Dendritic cell treated with granulocyte-macrophage colony-stimulating factor and Interleukin-4, amounts not matched to agents 40 ng/mL and 50 ng/mL, for 4 days (primary cell): ENCODE measurements at regions of chr6 and their contacts with region 1.

Region 1: DNA sequence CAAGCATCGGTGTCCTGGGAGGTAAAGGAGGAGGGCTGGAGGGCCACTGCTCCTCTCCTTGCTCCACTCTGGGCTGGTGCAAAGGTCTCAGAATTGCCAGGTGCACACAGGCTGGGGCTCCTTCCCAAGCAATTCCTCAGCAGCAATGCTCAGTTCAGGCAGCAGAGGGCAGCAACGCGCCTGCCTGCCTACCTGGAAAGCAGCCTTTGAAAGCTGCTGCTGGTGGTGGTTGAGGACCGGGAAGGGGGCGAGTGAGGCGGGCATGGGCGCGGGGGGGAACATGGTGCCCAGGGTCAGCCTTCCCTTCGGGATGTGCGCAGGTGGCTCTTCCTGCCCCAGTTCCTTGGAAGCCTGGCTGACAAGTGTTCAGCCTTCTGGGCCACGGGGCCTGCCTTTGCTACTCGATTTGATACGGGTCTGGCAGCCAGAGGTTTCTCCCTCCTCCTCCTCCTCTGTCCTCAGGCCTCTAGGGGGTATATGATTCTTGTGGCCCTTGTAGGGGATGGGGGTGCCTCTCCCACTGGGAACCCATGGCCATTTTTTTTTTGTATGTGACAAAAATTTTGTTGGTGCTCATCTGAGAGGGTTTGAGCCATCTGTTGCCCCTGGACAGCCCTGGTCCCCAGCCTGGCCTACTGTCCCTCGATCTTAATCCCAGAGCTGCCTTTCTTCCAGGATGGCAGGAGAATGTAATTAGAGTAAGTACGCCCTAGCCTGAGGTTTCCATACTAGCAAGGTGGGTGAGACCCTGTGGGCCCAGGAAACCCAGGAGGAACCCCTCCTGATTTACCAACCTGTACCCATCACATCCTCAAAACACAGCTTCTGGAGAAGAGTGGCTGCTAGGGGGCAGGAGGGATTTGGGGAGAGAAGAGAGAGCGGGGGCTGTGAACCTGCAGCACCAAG is 20.1 kb downstream of the MRPS18A start:
- H3K4me3 Mint-ChIP-seq: no peak overlapping the region
- H3K27ac Mint-ChIP-seq: no peak overlapping the region
- H3K4me1 Mint-ChIP-seq: peaks cover 28% of the 10 kb centered on the region
- H3K27me3 Mint-ChIP-seq: peaks cover 32% of the 10 kb centered on the region

Region 2: GRCh38 chr6:43758617-43759050 is 91.1 kb after region 1 on chr6:
- intact Hi-C with region 1: loop called (anchors 5 kb)
- H3K4me3 Mint-ChIP-seq: no peak overlapping the region
- H3K27ac Mint-ChIP-seq: no peak overlapping the region
- H3K4me1 Mint-ChIP-seq: peaks cover 17% of the 10 kb centered on the region
- H3K27me3 Mint-ChIP-seq: peaks cover 44% of the 10 kb centered on the region

Region 3: DNA sequence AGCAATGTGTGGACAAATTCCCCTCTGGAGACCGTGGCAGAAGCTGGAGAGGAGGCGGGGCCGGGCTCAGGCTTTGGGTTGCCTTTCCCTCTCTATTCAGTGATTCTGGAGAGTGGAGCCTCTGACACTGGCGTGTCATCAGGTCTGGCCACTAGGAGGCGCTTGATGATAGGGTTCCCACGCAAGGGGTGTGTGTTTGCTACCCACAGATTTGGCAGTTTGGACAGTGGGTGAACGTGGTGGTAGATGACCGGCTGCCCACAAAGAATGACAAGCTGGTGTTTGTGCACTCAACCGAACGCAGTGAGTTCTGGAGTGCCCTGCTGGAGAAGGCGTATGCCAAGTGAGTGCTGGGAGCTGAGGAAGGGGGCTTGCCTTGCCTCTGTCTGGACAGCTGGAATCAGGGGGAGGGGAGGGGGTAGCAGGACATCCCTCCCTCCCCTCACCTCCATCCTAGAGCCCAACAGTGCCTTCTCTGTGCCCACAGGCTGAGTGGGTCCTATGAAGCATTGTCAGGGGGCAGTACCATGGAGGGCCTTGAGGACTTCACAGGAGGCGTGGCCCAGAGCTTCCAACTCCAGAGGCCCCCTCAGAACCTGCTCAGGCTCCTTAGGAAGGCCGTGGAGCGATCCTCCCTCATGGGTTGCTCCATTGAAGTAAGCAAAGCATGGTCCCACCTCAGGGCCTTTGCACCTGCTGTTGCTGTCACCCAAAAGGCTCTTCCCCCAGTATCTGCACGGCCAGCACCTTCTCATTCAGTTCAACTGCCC is 505.4 kb after region 1 on chr6:
- intact Hi-C with region 1: no loop called
- H3K4me3 Mint-ChIP-seq: no peak overlapping the region
- H3K27ac Mint-ChIP-seq: no peak overlapping the region
- H3K4me1 Mint-ChIP-seq: peaks cover 28% of the 10 kb centered on the region
- H3K27me3 Mint-ChIP-seq: peaks cover 26% of the 10 kb centered on the region